Panc1 (cell line): ENCODE measurements at regions of chr4 and their contacts with region 1.

Region 1: DNA sequence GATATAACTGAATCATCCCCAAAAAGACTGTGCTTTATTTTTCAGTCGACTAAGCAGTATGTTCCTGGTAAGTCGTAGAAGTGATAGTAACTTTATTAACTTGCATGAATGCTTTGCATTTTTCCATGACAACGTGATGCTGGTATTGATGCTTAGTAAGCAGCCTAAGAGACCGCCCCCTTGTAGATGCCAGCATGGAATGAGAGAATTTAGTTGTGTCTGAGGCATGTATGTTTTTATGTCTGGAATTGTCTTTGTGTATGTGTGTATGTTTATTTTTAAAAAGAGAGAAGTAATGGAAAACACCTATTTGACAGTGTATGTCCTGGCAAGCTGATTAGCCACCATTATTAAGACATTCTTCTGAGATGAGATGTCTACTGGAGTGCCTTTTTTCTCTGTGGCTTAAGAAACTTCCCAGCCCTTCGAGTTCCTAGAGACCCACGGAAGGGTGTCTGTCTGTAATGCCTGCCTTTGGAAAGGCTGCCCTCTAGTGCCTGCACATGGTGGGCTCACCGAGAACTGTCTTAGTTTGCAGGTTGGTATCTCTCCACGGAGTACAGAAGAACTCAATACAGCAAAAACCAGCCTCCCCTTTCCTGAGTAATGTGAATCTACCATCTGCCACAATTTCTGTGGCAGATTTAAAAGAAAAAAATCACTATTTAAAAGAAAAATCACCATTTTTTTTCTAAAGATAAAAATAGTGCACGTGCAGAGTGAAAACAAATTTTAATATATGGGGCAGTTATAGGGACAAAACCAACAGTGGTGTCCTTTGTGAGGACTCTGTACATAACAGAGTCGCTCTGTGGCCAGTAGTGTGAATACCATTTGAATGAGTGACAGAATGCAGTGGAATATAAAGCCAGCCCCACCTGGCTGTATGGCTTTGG is 85.9 kb downstream of the AASDH start:
- DNase-seq: peak; percentile 65
- ATAC-seq: peak; percentile 99
- H3K4me3 ChIP-seq: no peak overlapping the region
- H3K27ac ChIP-seq: no peak overlapping the region
- H3K4me1 ChIP-seq: peaks cover 3% of the 10 kb centered on the region
- H3K27me3 ChIP-seq: no peaks in the 10 kb centered on the region
- CTCF ChIP-seq: peak; percentile 92

Region 2: GRCh38 chr4:55948726-55949474 is 352.5 kb before region 1 on chr4 and contains the start of gene CEP135:
- CTCF ChIA-PET with region 1: no interaction called
- POLR2A ChIA-PET with region 1: no interaction called
- in situ Hi-C with region 1: no loop called
- intact Hi-C with region 1: loop called (anchors 5 kb)
- DNase-seq: peak; percentile 61
- ATAC-seq: peak; percentile 93
- H3K4me3 ChIP-seq: peak within 1 kb of the TSS; percentile 60 to 90
- H3K27ac ChIP-seq: peak within 1 kb of the TSS; percentile 88
- H3K4me1 ChIP-seq: peaks cover 15% of the 10 kb centered on the region
- H3K27me3 ChIP-seq: no peaks in the 10 kb centered on the region
- CTCF ChIP-seq: peak; percentile 92
- total RNA-seq, gene CEP135: 9.5 TPM